ENCODE measurements at regions of chr2 and their contacts with region 1.

Region 1: GRCh38 chr2:170396799-170397459 is 219.0 kb downstream of the MYO3B start:
- DNase-seq: no peak
- H3K4me3 Mint-ChIP-seq: no peak overlapping the region
- H3K27ac Mint-ChIP-seq: no peak overlapping the region
- H3K4me1 Mint-ChIP-seq: no peaks in the 10 kb centered on the region
- H3K27me3 Mint-ChIP-seq: peaks cover 28% of the 10 kb centered on the region
- CTCF ChIP-seq: peak; percentile 44

Region 2: GRCh38 chr2:170298115-170298514 is 98.8 kb before region 1 on chr2:
- CTCF ChIA-PET with region 1: no interaction called
- POLR2A ChIA-PET with region 1: no interaction called
- intact Hi-C with region 1: no loop called
- DNase-seq: no peak
- H3K4me3 Mint-ChIP-seq: no peak overlapping the region
- H3K27ac Mint-ChIP-seq: no peak overlapping the region
- H3K4me1 Mint-ChIP-seq: no peaks in the 10 kb centered on the region
- H3K27me3 Mint-ChIP-seq: peaks cover 45% of the 10 kb centered on the region
- CTCF ChIP-seq: no peak

Region 3: DNA sequence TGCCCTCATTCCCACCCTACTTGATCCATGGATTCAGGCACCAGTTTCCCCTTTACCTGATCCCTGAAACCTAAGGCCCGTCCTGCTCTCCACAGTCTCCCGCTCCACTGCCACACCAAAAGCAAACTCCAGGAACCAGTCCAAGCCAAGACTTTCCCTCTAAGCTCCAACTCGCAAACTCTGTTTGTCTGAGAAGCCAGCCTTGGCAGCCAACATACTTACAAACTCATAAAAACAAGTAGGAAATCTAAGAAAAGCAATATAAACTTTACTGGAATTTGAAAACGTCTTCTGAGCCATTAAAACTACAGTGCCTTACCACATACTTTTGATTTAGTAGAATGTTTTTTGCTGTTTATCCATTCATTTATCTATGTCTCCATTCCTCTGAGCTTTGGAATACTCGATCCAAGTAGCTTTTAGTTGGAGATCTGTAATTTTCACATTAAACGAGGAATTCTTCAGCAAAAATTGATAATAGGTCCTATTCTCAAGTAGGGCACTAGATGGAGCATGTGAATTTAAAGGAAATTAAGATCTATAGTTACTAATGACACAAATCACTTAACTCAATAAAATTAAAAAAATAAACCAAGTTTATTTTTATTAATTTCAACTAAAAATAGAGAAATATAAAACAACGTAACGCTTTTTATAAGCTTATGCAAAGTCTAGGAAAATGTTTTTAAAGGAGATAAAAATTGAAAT is 19.3 kb before region 1 on chr2:
- CTCF ChIA-PET with region 1: interaction called, 20 read pairs
- POLR2A ChIA-PET with region 1: no interaction called
- intact Hi-C with region 1: no loop called
- DNase-seq: no peak
- H3K4me3 Mint-ChIP-seq: no peak overlapping the region
- H3K27ac Mint-ChIP-seq: no peak overlapping the region
- H3K4me1 Mint-ChIP-seq: peaks cover 17% of the 10 kb centered on the region
- H3K27me3 Mint-ChIP-seq: peaks cover 11% of the 10 kb centered on the region
- CTCF ChIP-seq: no peak

Region 4: DNA sequence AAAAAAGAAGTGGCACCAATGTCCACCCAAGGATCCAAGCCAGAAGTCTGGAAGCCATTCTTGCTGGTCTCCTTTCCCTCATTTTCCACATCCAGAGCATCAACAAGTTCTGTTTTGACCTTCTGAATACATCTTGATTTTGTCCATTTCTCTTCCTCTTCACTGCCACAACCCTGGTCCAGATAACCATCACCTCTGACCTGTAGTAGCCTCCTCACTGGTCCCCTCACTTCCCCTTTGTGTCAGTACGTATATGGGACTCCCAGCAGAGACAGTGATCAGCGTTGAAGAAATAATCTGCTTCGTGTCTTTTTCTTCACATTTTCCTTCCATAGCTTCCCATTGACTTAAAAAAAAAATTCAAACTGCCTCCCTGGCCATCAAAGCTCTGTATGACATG is 208.9 kb after region 1 on chr2:
- CTCF ChIA-PET with region 1: no interaction called
- POLR2A ChIA-PET with region 1: no interaction called
- intact Hi-C with region 1: no loop called
- DNase-seq: no peak
- H3K4me3 Mint-ChIP-seq: no peak overlapping the region
- H3K27ac Mint-ChIP-seq: no peak overlapping the region
- H3K4me1 Mint-ChIP-seq: no peaks in the 10 kb centered on the region
- H3K27me3 Mint-ChIP-seq: peaks cover 15% of the 10 kb centered on the region
- CTCF ChIP-seq: no peak